CD4-positive, alpha-beta memory T cell (primary cell): ENCODE measurements at regions of chr2 and their contacts with region 1.

Region 1: GRCh38 chr2:27370026-27370815 is at the starts of genes EIF2B4 and SNX17:
- DNase-seq: peak; percentile 99 to 100 (median 99)
- H3K4me3 ChIP-seq: peak within 1 kb of the TSS; percentile 72 to 86
- H3K4me3 Mint-ChIP-seq: peak within 1 kb of the TSS; percentile 96 to 100 (median 98)
- H3K27ac ChIP-seq: peak within 1 kb of the TSS; percentile 94
- H3K27ac Mint-ChIP-seq: peak within 1 kb of the TSS; percentile 89 to 100 (median 98)
- H3K4me1 ChIP-seq: peaks cover 38% of the 10 kb centered on the region
- H3K4me1 Mint-ChIP-seq: peaks cover 28 to 58% (median 41%) of the 10 kb centered on the region in 4 donors
- H3K27me3 ChIP-seq: no peaks in the 10 kb centered on the region
- H3K27me3 Mint-ChIP-seq: no peaks in the 10 kb centered on the region
- total RNA-seq, gene EIF2B4: 48.4 to 56.0 TPM
- total RNA-seq, gene SNX17: 122 to 130 TPM

Region 2: GRCh38 chr2:27133905-27134780 is 236.1 kb before region 1 on chr2 and contains the start of gene PREB:
- CTCF ChIA-PET with region 1: interaction called, 3 read pairs
- POLR2A ChIA-PET with region 1: interaction called, 7 read pairs
- intact Hi-C with region 1: loop called (anchors 1 kb)
- DNase-seq: peak; percentile 94 to 98 (median 98)
- H3K4me3 ChIP-seq: peak within 1 kb of the TSS; percentile 52 to 89
- H3K4me3 Mint-ChIP-seq: peak within 1 kb of the TSS; percentile 92 to 99 (median 96)
- H3K27ac ChIP-seq: peak within 1 kb of the TSS; percentile 92
- H3K27ac Mint-ChIP-seq: peak within 1 kb of the TSS; percentile 80 to 99 (median 98)
- H3K4me1 ChIP-seq: peaks cover 26% of the 10 kb centered on the region
- H3K4me1 Mint-ChIP-seq: peaks cover 12 to 36% (median 26%) of the 10 kb centered on the region in 4 donors
- H3K27me3 ChIP-seq: no peaks in the 10 kb centered on the region
- H3K27me3 Mint-ChIP-seq: no peaks in the 10 kb centered on the region
- total RNA-seq, gene PREB: 64.5 to 65.3 TPM

Region 3: GRCh38 chr2:27271631-27272340 is 98.4 kb before region 1 on chr2:
- CTCF ChIA-PET with region 1: no interaction called
- POLR2A ChIA-PET with region 1: no interaction called
- intact Hi-C with region 1: no loop called
- DNase-seq: no peak
- H3K4me3 ChIP-seq: no peak overlapping the region
- H3K4me3 Mint-ChIP-seq: no peak overlapping the region
- H3K27ac ChIP-seq: no peak overlapping the region
- H3K27ac Mint-ChIP-seq: no peak overlapping the region
- H3K4me1 ChIP-seq: no peaks in the 10 kb centered on the region
- H3K4me1 Mint-ChIP-seq: no peaks in the 10 kb centered on the region
- H3K27me3 ChIP-seq: no peaks in the 10 kb centered on the region
- H3K27me3 Mint-ChIP-seq: peaks cover 5 to 6% of the 10 kb centered on the region in 2 donors

Region 4: DNA sequence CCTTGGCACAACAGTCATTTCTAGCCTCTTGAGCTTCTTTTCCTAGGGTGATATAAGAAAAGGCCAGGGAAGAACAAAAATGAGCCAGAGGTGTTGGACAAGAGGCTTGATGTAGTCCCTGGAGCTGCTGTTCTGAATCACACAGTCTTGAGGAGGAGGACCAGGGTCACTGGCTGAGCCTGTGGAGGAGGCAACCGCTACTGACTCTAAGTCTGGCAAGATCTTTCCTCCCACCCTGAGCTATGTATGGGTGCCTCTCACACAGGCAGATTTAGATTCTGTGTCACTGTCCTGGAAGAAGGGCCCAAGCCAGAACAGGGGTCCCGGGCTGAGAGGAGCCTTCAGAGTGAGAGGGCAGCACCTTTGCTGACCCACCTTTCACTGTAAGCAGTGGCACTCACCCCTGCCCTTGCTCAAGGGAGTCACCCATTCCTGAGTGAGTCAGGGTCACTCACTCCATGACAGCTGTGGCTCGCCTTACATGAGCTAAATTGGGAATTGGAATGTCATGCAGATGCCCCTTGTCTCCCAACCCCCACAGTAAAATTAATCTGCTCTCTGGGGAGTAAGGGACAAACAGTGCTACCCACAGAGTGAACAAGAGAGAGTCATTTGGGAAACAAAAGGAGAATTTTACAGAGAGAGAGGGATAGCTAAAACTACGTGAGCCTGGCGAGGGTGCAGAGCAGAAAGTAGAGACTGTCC is 88.2 kb before region 1 on chr2 and contains the start of gene TRIM54:
- CTCF ChIA-PET with region 1: no interaction called
- POLR2A ChIA-PET with region 1: no interaction called
- intact Hi-C with region 1: no loop called
- DNase-seq: no peak
- H3K4me3 ChIP-seq: no peak within 1 kb of the TSS
- H3K4me3 Mint-ChIP-seq: no peak within 1 kb of the TSS
- H3K27ac ChIP-seq: no peak within 1 kb of the TSS
- H3K27ac Mint-ChIP-seq: peak within 1 kb of the TSS in 1 of 7 donors; percentile 62
- H3K4me1 ChIP-seq: no peaks in the 10 kb centered on the region
- H3K4me1 Mint-ChIP-seq: peaks cover 0 to 4% (median 1%) of the 10 kb centered on the region in 4 donors
- H3K27me3 ChIP-seq: peaks cover 6% of the 10 kb centered on the region
- H3K27me3 Mint-ChIP-seq: peaks cover 11 to 25% of the 10 kb centered on the region in 2 donors
- total RNA-seq, gene TRIM54: 0.17 TPM in 1 of 2 experiments, not detected in the other

Region 5: GRCh38 chr2:27322766-27323595 is 47.2 kb before region 1 on chr2 and contains the start of gene MPV17:
- CTCF ChIA-PET with region 1: interaction called, 4 read pairs
- POLR2A ChIA-PET with region 1: interaction called, 11 read pairs
- intact Hi-C with region 1: loop called (anchors 1 kb)
- DNase-seq: peak; percentile 82 to 89 (median 82)
- H3K4me3 ChIP-seq: peak within 1 kb of the TSS; percentile 81 to 97
- H3K4me3 Mint-ChIP-seq: peak within 1 kb of the TSS; percentile 95 to 100 (median 96)
- H3K27ac ChIP-seq: peak within 1 kb of the TSS; percentile 95
- H3K27ac Mint-ChIP-seq: peak within 1 kb of the TSS; percentile 96 to 100 (median 98)
- H3K4me1 ChIP-seq: peaks cover 25% of the 10 kb centered on the region
- H3K4me1 Mint-ChIP-seq: peaks cover 12 to 28% (median 18%) of the 10 kb centered on the region in 4 donors
- H3K27me3 ChIP-seq: no peaks in the 10 kb centered on the region
- H3K27me3 Mint-ChIP-seq: no peaks in the 10 kb centered on the region
- total RNA-seq, gene MPV17: 89.3 to 93.3 TPM

Region 6: GRCh38 chr2:27380626-27381545 is 10.7 kb after region 1 on chr2 and contains the start of gene ZNF513:
- CTCF ChIA-PET with region 1: interaction called, 8 read pairs
- POLR2A ChIA-PET with region 1: interaction called, 106 read pairs
- intact Hi-C with region 1: loop called (anchors 1 kb)
- DNase-seq: peak; percentile 81 to 89 (median 83)
- H3K4me3 ChIP-seq: peak within 1 kb of the TSS; percentile 66 to 79
- H3K4me3 Mint-ChIP-seq: peak within 1 kb of the TSS; percentile 89 to 93 (median 90)
- H3K27ac ChIP-seq: peak within 1 kb of the TSS; percentile 78
- H3K27ac Mint-ChIP-seq: peak within 1 kb of the TSS; percentile 92 to 97 (median 95)
- H3K4me1 ChIP-seq: peaks cover 20% of the 10 kb centered on the region
- H3K4me1 Mint-ChIP-seq: peaks cover 15 to 36% (median 25%) of the 10 kb centered on the region in 4 donors
- H3K27me3 ChIP-seq: no peaks in the 10 kb centered on the region
- H3K27me3 Mint-ChIP-seq: no peaks in the 10 kb centered on the region
- total RNA-seq, gene ZNF513: 17.6 to 20.1 TPM

Region 7: GRCh38 chr2:27428213-27428977 is 58.2 kb after region 1 on chr2 and contains the start of gene NRBP1:
- CTCF ChIA-PET with region 1: interaction called, 12 read pairs
- POLR2A ChIA-PET with region 1: interaction called, 15 read pairs
- intact Hi-C with region 1: loop called (anchors 1 kb)
- DNase-seq: peak; percentile 86 to 91 (median 89)
- H3K4me3 ChIP-seq: peak within 1 kb of the TSS; percentile 64 to 76
- H3K4me3 Mint-ChIP-seq: peak within 1 kb of the TSS; percentile 97 to 100 (median 98)
- H3K27ac ChIP-seq: peak within 1 kb of the TSS; percentile 93
- H3K27ac Mint-ChIP-seq: peak within 1 kb of the TSS; percentile 96 to 99 (median 98)
- H3K4me1 ChIP-seq: peaks cover 45% of the 10 kb centered on the region
- H3K4me1 Mint-ChIP-seq: peaks cover 24 to 44% (median 35%) of the 10 kb centered on the region in 4 donors
- H3K27me3 ChIP-seq: no peaks in the 10 kb centered on the region
- H3K27me3 Mint-ChIP-seq: no peaks in the 10 kb centered on the region
- total RNA-seq, gene NRBP1: 115 to 119 TPM

Region 8: DNA sequence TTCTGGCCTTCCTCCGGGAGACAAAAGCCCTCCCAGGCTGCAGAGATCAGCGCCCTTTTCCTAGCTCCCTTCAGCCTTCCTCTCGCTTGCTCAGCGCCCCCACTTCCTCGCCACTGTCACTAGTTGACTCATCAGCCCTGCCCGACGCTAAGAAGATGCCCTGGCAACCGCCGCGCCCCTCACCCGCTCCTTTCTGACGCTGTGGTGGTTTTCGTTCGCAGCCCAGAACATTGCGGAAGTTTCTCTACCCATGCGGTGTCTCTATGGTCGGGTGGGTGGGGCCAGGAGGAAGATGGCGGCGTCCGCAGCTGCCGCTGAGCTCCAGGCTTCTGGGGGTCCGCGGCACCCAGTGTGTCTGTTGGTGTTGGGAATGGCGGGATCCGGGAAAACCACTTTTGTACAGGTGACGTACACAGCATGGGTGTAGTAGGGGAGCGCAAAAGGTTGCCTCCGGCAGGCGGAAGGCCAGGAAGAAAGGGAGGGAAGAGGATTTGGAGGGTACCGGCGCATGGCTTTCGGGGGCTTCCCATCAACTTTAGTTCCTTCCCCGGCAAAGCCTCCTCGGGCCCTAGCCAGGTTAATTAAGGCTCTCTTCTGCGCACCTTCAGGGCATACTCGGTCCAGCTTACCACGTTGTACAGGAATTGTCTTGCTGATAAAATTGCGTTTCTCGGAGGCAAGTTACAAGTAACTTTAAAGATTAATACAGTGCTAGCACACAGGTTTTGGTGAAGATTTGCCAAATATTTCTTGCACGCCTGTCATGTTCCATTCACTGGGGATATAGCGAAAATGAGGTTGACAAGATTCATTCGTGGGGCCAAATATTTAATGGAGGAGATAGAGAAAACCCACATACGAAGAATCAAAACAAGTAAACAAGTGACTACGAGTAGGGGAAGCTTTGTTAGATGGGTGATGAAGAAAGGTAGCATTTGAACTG is 258.8 kb after region 1 on chr2 and contains the starts of genes CCDC121 and GPN1:
- CTCF ChIA-PET with region 1: no interaction called
- POLR2A ChIA-PET with region 1: interaction called, 13 read pairs
- intact Hi-C with region 1: no loop called
- DNase-seq: peak; percentile 93 to 98 (median 94)
- H3K4me3 ChIP-seq: peak within 1 kb of the TSS; percentile 68 to 92
- H3K4me3 Mint-ChIP-seq: peak within 1 kb of the TSS in 2 of 8 donors; percentile 8 to 57
- H3K27ac ChIP-seq: peak within 1 kb of the TSS; percentile 85
- H3K27ac Mint-ChIP-seq: peak within 1 kb of the TSS in 3 of 7 donors; percentile 76 to 85 (median 78)
- H3K4me1 ChIP-seq: peaks cover 17% of the 10 kb centered on the region
- H3K4me1 Mint-ChIP-seq: peaks cover 9 to 21% (median 11%) of the 10 kb centered on the region in 4 donors
- H3K27me3 ChIP-seq: no peaks in the 10 kb centered on the region
- H3K27me3 Mint-ChIP-seq: no peaks in the 10 kb centered on the region
- total RNA-seq, gene CCDC121: 1.3 to 2.2 TPM
- total RNA-seq, gene GPN1: 28.9 to 32.8 TPM

Region 9: DNA sequence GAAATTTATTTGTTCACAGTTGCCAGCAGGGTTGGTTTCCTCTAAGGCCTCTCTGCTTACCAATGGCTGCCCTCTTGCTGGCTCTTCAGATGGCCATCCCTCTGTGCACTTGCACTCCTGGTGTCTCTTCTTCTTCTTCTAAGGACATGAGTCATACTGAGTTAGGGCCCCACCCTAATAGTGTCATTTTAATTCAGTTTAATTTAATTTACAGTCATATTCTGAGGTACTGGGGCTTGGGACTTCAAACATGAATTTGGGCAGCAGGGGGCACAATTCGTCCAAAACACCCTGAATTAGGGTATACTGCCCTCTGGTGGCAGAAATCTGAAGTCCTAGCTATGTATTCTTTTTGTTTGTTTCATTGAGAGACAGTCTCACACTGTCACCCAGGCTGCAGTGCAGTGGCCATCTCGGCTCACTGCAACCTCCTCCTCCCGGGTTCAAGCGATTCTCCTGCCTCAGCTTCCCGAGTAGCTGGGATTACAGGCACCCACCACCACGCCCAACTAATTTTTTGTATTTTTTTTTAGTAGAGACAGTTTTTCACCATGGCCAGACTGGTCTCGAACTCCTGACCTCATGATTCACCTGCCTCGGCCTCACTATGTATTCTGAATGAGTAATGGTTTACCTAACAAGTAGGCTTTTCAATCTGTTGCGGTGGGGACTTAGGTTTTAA is 313.3 kb after region 1 on chr2:
- CTCF ChIA-PET with region 1: no interaction called
- POLR2A ChIA-PET with region 1: no interaction called
- intact Hi-C with region 1: loop called (anchors 5 kb)
- DNase-seq: peak; percentile 84 to 87 (median 86)
- H3K4me3 ChIP-seq: no peak overlapping the region
- H3K4me3 Mint-ChIP-seq: peak overlapping the region in 1 of 8 donors; percentile 36
- H3K27ac ChIP-seq: no peak overlapping the region
- H3K27ac Mint-ChIP-seq: peak overlapping the region; percentile 62 to 93 (median 88)
- H3K4me1 ChIP-seq: peaks cover 26% of the 10 kb centered on the region
- H3K4me1 Mint-ChIP-seq: peaks cover 12 to 21% (median 16%) of the 10 kb centered on the region in 4 donors
- H3K27me3 ChIP-seq: no peaks in the 10 kb centered on the region
- H3K27me3 Mint-ChIP-seq: no peaks in the 10 kb centered on the region

Region 10: DNA sequence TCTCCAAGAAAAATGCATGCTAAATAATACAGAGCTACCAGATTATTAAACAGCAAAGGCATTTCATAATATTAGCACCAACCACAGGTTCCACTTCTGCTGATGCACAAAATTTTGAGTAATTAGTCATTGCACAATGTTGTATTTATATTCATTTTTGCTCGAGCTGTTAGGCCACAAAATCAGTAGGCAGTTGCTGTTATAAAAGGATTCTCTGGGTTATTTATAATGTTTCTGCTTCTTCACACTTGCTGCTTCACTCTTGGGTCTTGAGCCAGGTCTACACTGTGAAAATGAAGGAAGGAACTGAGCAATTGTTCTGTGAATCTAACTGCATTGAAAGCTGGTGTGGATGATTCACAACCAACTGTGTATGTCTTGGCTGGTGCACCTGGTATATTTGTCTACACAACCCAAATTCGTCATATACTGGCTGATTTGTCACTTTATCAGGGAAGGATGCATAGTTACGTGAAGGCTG is 439.6 kb after region 1 on chr2:
- CTCF ChIA-PET with region 1: no interaction called
- POLR2A ChIA-PET with region 1: no interaction called
- intact Hi-C with region 1: no loop called
- DNase-seq: no peak
- H3K4me3 ChIP-seq: no peak overlapping the region
- H3K4me3 Mint-ChIP-seq: no peak overlapping the region
- H3K27ac ChIP-seq: no peak overlapping the region
- H3K27ac Mint-ChIP-seq: no peak overlapping the region
- H3K4me1 ChIP-seq: no peaks in the 10 kb centered on the region
- H3K4me1 Mint-ChIP-seq: peaks cover 0 to 2% (median 0%) of the 10 kb centered on the region in 4 donors
- H3K27me3 ChIP-seq: no peaks in the 10 kb centered on the region
- H3K27me3 Mint-ChIP-seq: no peaks in the 10 kb centered on the region